ENCODE measurements at regions of chr6 and their contacts with region 1.

Region 1: GRCh38 chr6:107401573-107401972 is 57.8 kb downstream of the PDSS2 start:
- DNase-seq: no peak
- H3K4me3 ChIP-seq: no peak overlapping the region
- H3K27ac ChIP-seq: no peak overlapping the region
- H3K4me1 ChIP-seq: no peaks in the 10 kb centered on the region
- H3K27me3 ChIP-seq: no peaks in the 10 kb centered on the region
- CTCF ChIP-seq: no peak

Region 2: GRCh38 chr6:107361753-107362604 is 39.6 kb before region 1 on chr6:
- CTCF ChIA-PET with region 1: interaction called, 17 read pairs
- POLR2A ChIA-PET with region 1: no interaction called
- intact Hi-C with region 1: no loop called
- DNase-seq: no peak
- H3K4me3 ChIP-seq: no peak overlapping the region
- H3K27ac ChIP-seq: no peak overlapping the region
- H3K4me1 ChIP-seq: no peaks in the 10 kb centered on the region
- H3K27me3 ChIP-seq: no peaks in the 10 kb centered on the region
- CTCF ChIP-seq: no peak

Measured in PC-9 (cell line).